Endothelial cell of umbilical vein (primary cell): ENCODE measurements at regions of chrX and their contacts with region 1.

Region 1: DNA sequence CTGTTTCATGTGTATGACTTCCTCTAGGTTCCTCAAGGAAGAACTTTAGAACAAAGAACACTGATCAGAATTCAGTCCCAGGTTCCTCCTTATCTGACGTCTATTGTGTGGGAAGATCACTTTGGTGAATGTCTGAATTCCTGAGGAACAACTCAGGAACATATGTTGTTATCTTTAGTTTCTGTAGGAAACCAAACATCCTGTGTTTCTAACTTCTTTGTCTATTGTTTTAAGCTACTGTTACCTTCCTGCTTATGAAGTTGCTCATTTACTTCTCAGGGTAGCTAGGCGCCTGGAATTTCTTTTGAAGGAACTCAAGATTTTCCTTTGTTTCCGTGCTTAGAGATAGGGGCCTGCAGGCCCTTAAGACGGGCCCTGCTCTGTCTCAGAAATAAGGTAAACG is 46.2 kb downstream of the MAGEB5 start:
- DNase-seq: peak; percentile 91
- H3K4me3 ChIP-seq: no peak overlapping the region
- H3K27ac ChIP-seq: peak overlapping the region; percentile 99
- H3K4me1 ChIP-seq: peaks cover 23% of the 10 kb centered on the region
- H3K27me3 ChIP-seq: no peaks in the 10 kb centered on the region
- CTCF ChIP-seq: no peak
- POLR2A ChIP-seq: peak; percentile 41

Region 2: GRCh38 chrX:25873196-25873595 is 388.9 kb before region 1 on chrX:
- CTCF ChIA-PET with region 1: no interaction called
- POLR2A ChIA-PET with region 1: interaction called, 3 read pairs
- dilution Hi-C with region 1: no loop called
- intact Hi-C with region 1: loop called (anchors 2 kb)
- DNase-seq: peak; percentile 30
- H3K4me3 ChIP-seq: no peak overlapping the region
- H3K27ac ChIP-seq: peak overlapping the region; percentile 7
- H3K4me1 ChIP-seq: peaks cover 25% of the 10 kb centered on the region
- H3K27me3 ChIP-seq: no peaks in the 10 kb centered on the region
- CTCF ChIP-seq: no peak
- POLR2A ChIP-seq: no peak

Region 3: DNA sequence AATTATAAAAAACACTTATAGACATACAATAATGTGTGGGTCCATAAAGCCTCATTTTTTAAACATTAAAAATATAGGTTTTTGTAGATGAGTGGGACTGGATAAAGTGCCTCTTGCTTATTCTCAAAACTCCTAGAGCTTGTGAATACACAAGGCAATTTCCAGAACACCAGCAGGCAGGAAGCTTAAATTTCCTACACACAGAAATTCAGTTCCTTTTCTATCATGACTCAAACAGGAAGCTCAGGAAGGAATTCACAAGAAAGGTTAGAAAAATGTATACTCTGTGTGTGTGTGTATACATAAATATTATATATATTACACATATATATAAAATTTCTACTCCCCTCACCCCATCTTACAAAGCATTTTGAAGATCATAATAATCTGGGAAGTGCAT is 58.6 kb before region 1 on chrX:
- CTCF ChIA-PET with region 1: no interaction called
- POLR2A ChIA-PET with region 1: no interaction called
- dilution Hi-C with region 1: no loop called
- intact Hi-C with region 1: loop called (anchors 5 kb)
- DNase-seq: peak; percentile 53
- H3K4me3 ChIP-seq: no peak overlapping the region
- H3K27ac ChIP-seq: no peak overlapping the region
- H3K4me1 ChIP-seq: peaks cover 12% of the 10 kb centered on the region
- H3K27me3 ChIP-seq: no peaks in the 10 kb centered on the region
- CTCF ChIP-seq: no peak
- POLR2A ChIP-seq: no peak

Region 4: GRCh38 chrX:26574234-26574633 is 312.1 kb after region 1 on chrX:
- CTCF ChIA-PET with region 1: no interaction called
- POLR2A ChIA-PET with region 1: no interaction called
- dilution Hi-C with region 1: no loop called
- intact Hi-C with region 1: loop called (anchors 10 kb)
- DNase-seq: peak; percentile 48
- H3K4me3 ChIP-seq: no peak overlapping the region
- H3K27ac ChIP-seq: no peak overlapping the region
- H3K4me1 ChIP-seq: no peaks in the 10 kb centered on the region
- H3K27me3 ChIP-seq: no peaks in the 10 kb centered on the region
- CTCF ChIP-seq: no peak
- POLR2A ChIP-seq: no peak

Region 5: GRCh38 chrX:27565992-27566391 is 1303.9 kb after region 1 on chrX:
- CTCF ChIA-PET with region 1: no interaction called
- POLR2A ChIA-PET with region 1: no interaction called
- dilution Hi-C with region 1: no loop called
- intact Hi-C with region 1: loop called (anchors 1 kb)
- DNase-seq: peak; percentile 94
- H3K4me3 ChIP-seq: no peak overlapping the region
- H3K27ac ChIP-seq: peak overlapping the region; percentile 96
- H3K4me1 ChIP-seq: peaks cover 15% of the 10 kb centered on the region
- H3K27me3 ChIP-seq: no peaks in the 10 kb centered on the region
- CTCF ChIP-seq: no peak
- POLR2A ChIP-seq: no peak